Activated naive CD8-positive, alpha-beta T cell treated with anti-CD3 and anti-CD28 coated beads, Interleukin-2, amount 10 ng/mL, durations not matched to agents 7 days and 5 days (primary cell): ENCODE measurements at regions of chr6 and their contacts with region 1.

Region 1: DNA sequence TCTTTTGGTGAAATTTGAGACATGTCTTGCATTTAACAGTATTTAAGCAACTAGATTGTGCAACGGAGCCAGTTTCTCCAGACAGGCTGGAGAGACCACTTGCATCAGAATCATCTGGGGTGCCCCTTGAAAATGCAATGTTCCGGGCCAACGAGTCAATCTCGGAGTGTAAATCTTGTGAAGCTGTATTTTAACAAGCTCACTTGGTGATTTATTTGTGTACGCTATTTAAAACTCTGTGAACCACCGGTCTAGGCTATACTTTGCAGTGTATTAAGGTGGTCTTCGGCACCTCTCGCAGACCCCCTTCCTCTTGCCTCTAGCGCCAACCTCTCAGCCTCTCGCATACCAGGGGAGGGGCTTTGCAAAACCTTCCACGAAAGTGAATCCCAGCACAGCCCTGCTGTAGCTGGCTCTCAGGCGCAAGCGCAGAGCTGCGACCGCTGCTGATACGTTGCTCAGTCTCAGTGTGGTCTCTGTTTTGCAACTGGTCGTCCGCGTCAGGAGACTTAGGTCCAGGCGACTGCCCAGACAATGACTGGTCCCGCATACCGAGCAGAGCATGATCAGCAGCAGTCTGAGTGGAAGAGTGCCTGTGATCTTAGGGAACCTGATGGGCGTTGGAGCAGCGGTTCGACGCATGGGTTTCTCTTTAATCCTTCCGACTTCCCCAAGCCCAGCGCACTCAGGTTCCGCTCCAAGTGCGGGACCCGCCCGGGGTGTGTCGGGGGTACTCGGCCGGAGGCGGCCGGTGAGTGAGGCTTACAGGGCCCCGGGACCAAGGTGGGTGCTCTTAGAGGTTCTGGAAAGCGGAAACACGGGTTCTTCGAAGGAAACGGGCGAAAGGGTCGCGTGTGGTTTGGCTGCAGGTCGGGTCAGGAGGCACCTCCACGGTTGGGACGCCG is at the start of gene ZNF391:
- DNase-seq: peak; percentile 79
- ATAC-seq: peak; percentile 89
- H3K4me3 Mint-ChIP-seq: peak within 1 kb of the TSS; percentile 90
- H3K27ac Mint-ChIP-seq: peak within 1 kb of the TSS; percentile 94
- H3K4me1 Mint-ChIP-seq: peaks cover 9% of the 10 kb centered on the region
- H3K27me3 Mint-ChIP-seq: peaks cover 6% of the 10 kb centered on the region
- total RNA-seq, gene ZNF391: 3.9 to 4.2 TPM

Region 2: DNA sequence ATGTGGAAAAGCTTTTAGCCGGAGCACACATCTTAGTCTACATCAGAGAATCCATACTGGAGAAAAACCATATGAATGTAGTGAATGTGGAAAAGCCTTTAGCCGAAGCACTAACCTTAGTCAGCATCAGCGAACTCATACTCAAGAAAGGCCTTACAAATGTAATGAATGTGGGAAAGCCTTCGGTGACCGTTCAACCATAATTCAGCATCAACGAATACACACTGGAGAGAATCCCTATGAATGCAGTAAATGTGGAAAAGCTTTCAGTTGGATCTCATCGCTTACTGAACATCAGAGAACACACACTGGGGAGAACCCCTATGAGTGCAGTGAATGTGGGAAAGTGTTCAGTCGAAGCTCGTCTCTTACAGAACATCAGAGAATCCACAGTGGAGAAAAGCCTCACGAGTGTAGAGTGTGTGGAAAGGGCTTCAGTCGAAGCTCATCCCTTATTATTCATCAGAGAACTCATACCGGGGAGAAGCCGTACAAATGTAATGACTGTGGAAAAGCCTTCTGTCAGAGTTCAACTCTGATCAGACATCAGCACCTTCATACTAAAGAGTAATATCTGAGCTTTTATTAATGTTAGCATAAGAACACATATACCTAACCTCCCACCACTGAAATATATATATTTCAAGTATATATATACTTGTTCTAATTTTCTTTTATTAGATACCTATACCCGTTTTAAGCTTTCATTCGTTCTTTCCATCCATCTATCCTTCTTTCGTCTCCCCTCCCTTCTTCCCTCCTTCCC is 12.5 kb after region 1 on chr6:
- POLR2A ChIA-PET with region 1: no interaction called
- DNase-seq: no peak
- ATAC-seq: no peak
- H3K4me3 Mint-ChIP-seq: no peak overlapping the region
- H3K27ac Mint-ChIP-seq: no peak overlapping the region
- H3K4me1 Mint-ChIP-seq: no peaks in the 10 kb centered on the region
- H3K27me3 Mint-ChIP-seq: no peaks in the 10 kb centered on the region

Region 3: GRCh38 chr6:27472617-27473400 is 84.3 kb after region 1 on chr6 and contains the start of gene ZNF184:
- POLR2A ChIA-PET with region 1: interaction called, 10 read pairs
- DNase-seq: peak; percentile 85
- ATAC-seq: peak; percentile 87
- H3K4me3 Mint-ChIP-seq: peak within 1 kb of the TSS; percentile 92
- H3K27ac Mint-ChIP-seq: peak within 1 kb of the TSS; percentile 95
- H3K4me1 Mint-ChIP-seq: peaks cover 34% of the 10 kb centered on the region
- H3K27me3 Mint-ChIP-seq: no peaks in the 10 kb centered on the region
- total RNA-seq, gene ZNF184: 13.1 to 14.1 TPM